Esophagus squamous epithelium (tissue), 5 donors: ENCODE measurements at regions of chr9 and their contacts with region 1.

Region 1: GRCh38 chr9:130770679-130771442 is 64.2 kb upstream of the ABL1 start:
- DNase-seq: no peak
- H3K4me3 ChIP-seq: no peak overlapping the region
- H3K27ac ChIP-seq: no peak overlapping the region
- H3K4me1 ChIP-seq: peaks cover 6 to 27% (median 8%) of the 10 kb centered on the region in 3 donors
- H3K27me3 ChIP-seq: no peaks in the 10 kb centered on the region
- CTCF ChIP-seq: peak in 5 of 6 experiments; percentile 55 to 71 (median 64)
- POLR2A ChIP-seq: no peak

Region 2: DNA sequence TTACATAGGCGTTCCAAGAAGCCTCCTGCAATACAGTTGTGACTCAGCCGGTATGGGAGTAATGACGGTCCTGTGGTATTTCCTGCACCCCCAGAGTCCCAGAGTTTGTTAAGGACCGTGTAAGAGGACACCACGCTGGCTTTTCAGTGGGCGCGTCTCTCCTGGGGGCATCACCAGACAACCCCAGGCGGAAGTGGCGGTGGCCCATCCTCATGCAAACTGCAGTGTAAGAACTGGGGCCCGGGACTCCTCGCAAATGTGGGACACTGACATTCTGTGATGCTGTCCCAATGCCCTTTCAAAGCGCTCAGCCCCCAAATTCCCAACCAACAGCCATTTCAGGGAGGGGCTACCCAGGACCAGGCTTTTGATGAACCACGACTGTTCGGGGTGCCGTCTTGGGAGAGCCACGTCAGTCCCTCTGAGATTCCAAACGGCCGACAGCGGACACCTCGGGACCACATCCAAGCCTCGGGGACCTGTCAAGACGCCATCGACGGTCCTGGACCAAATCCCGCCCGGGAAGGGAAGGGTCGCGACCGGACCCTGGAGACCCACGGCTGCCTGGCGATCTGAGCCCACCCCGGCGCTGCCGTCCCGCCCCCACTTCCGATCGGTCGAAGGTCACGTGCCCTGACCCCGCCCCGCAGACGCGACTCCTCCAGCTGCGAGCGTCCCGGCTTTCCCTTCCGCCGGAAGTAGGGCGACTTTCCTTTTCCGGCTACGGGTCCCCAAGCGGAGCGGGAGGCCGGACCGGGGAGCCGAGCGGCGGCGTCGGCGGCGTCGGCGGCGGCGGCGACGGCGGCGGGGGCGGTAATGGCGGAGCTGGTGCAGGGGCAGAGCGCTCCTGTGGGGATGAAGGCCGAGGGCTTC is 191.8 kb before region 1 on chr9 and contains the start of gene FUBP3:
- intact Hi-C with region 1: no loop called
- DNase-seq: peak; percentile 50
- H3K4me3 ChIP-seq: peak within 1 kb of the TSS; percentile 92 to 99 (median 96)
- H3K27ac ChIP-seq: peak within 1 kb of the TSS; percentile 93 to 97 (median 95)
- H3K4me1 ChIP-seq: peaks cover 21 to 35% (median 21%) of the 10 kb centered on the region in 3 donors
- H3K27me3 ChIP-seq: no peaks in the 10 kb centered on the region
- CTCF ChIP-seq: no peak
- POLR2A ChIP-seq: peak in 3 of 4 donors; percentile 49 to 85 (median 76)
- total RNA-seq, gene FUBP3: 28.2 to 39.0 (median 33.9) TPM

Region 3: GRCh38 chr9:130712564-130713285 is 58.1 kb before region 1 on chr9:
- intact Hi-C with region 1: loop called (anchors 5 kb)
- DNase-seq: peak; percentile 90
- H3K4me3 ChIP-seq: peak overlapping the region; percentile 75 to 100 (median 87)
- H3K27ac ChIP-seq: peak overlapping the region; percentile 94 to 99 (median 98)
- H3K4me1 ChIP-seq: peaks cover 7 to 55% (median 23%) of the 10 kb centered on the region in 3 donors
- H3K27me3 ChIP-seq: no peaks in the 10 kb centered on the region
- CTCF ChIP-seq: peak in 1 of 6 experiments; percentile 24
- POLR2A ChIP-seq: peak in 2 of 4 donors; percentile 67 to 68

Region 4: DNA sequence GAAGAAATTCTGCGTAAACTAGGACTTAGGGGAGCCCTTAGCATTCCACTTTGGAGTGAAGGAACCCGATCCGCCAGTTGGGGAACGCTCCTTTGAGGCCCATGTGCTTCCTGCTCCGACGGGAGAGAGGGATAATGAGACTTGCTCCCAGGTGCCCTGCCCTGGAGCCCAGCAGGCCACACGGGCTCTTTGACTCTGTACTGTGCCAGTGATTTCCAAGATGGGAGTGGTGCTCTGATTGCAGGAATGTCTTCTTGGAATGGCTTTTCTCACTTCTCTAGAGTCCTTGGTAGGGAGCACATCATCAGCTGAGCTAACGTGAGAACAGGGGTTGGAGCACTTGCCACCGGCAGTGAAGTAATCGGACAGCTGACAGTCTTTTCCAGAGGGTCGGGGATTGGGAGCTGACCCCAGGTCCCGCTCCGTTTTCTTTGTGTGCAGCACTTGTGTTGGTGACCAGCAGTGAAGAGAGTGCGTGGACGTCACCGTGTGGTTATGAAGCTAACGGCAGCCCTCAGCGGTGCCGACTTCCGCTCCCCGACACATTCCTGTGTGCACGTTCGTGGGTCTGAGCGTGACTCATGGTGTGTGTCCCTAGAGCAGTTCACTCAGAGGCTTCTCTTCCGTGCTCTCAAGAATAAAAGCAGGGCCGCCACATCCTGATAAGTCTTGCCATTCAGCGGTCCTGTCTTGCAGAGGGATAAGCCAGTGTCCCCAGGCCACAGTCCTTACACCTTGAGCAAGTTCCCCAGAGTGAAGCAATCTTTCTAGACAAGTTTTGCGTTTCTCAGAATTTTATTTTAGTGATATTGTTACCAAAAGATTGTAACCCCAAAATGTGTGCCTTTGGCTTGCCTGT is 89.8 kb after region 1 on chr9:
- intact Hi-C with region 1: loop called (anchors 5 kb)
- DNase-seq: no peak
- H3K4me3 ChIP-seq: peak overlapping the region in 1 of 4 donors; percentile 39
- H3K27ac ChIP-seq: peak overlapping the region; percentile 56 to 86 (median 72)
- H3K4me1 ChIP-seq: peaks cover 3 to 68% (median 31%) of the 10 kb centered on the region in 3 donors
- H3K27me3 ChIP-seq: no peaks in the 10 kb centered on the region
- CTCF ChIP-seq: peak in 3 of 6 experiments; percentile 14 to 33 (median 25)
- POLR2A ChIP-seq: no peak

Region 5: GRCh38 chr9:130940693-130941576 is 170.1 kb after region 1 on chr9:
- intact Hi-C with region 1: loop called (anchors 10 kb)
- DNase-seq: no peak
- H3K4me3 ChIP-seq: peak overlapping the region in 1 of 4 donors; percentile 8
- H3K27ac ChIP-seq: no peak overlapping the region
- H3K4me1 ChIP-seq: peaks cover 20 to 51% (median 31%) of the 10 kb centered on the region in 3 donors
- H3K27me3 ChIP-seq: peaks cover 16 to 90% (median 27%) of the 10 kb centered on the region in 4 donors
- CTCF ChIP-seq: peak; percentile 31 to 94 (median 86)
- POLR2A ChIP-seq: no peak